ENCODE measurements at regions of chr18 and their contacts with region 1.

Region 1: GRCh38 chr18:46794607-46795006 is 37.8 kb upstream of the ST8SIA5 start:
- DNase-seq: no peak
- H3K4me3 ChIP-seq: no peak overlapping the region
- H3K27ac ChIP-seq: no peak overlapping the region
- H3K4me1 ChIP-seq: no peaks in the 10 kb centered on the region
- H3K27me3 ChIP-seq: no peaks in the 10 kb centered on the region
- CTCF ChIP-seq: no peak
- EP300 ChIP-seq: no peak
- POLR2A ChIP-seq: no peak

Region 2: GRCh38 chr18:46239549-46239948 is 555.1 kb before region 1 on chr18:
- in situ Hi-C with region 1: no loop called
- intact Hi-C with region 1: loop called (anchors 5 kb)
- DNase-seq: no peak
- H3K4me3 ChIP-seq: no peak overlapping the region
- H3K27ac ChIP-seq: no peak overlapping the region
- H3K4me1 ChIP-seq: peaks cover 0 to 2% (median 0%) of the 10 kb centered on the region in 4 donors
- H3K27me3 ChIP-seq: no peaks in the 10 kb centered on the region
- CTCF ChIP-seq: no peak
- EP300 ChIP-seq: no peak
- POLR2A ChIP-seq: no peak